K562 (cell line): ENCODE measurements at regions of chr1 and their contacts with region 1.

Region 1: DNA sequence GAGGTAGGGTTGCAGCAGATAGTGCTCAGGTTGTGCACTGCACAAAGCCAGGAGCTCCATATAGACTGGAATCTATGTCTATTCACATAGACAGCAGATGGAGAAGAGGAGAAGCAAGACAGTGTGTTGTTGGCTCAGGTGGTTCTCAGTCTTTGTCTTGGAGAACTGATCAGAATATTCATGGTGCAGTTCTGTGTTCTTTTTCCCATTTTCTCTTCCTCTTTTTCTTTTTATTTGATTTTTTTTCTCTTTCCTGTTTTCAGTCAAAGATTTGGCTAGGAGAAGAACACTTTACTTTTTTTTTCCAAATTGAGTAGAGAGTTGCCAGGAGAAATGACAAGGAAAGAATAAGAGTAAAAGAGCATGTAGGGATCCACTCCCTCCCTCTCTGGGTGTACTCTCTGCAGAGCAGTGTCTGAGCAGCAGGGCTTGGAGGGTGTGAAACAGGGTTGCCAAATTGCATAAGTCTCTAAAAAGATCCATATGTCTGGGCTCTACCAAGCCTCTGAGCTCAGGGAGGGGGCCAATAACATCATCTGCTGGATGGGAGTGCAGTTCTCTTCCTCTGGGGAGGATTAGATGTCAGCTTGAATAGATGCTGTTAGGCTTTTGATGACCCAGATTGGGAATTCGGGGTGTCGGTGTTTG is 8.7 kb upstream of the CD34 start:
- DNase-seq: no peak
- ATAC-seq: no peak
- H3K4me3 ChIP-seq: no peak overlapping the region
- H3K27ac ChIP-seq: no peak overlapping the region
- H3K4me1 ChIP-seq: peaks cover 6 to 26% of the 10 kb centered on the region in 2 experiments; a peak in 4 of 5 replicates
- H3K27me3 ChIP-seq: no peaks in the 10 kb centered on the region
- CTCF ChIP-seq: no peak
- EP300 ChIP-seq: no peak
- POLR2A ChIP-seq: no peak
- RAD21 ChIP-seq: no peak

Region 2: GRCh38 chr1:207811920-207812720 is 107.5 kb before region 1 on chr1:
- CTCF ChIA-PET with region 1: no interaction called
- POLR2A ChIA-PET with region 1: no interaction called
- in situ Hi-C with region 1: no loop called
- intact Hi-C with region 1: no loop called
- DNase-seq: peak; percentile 75 to 79 (median 78)
- ATAC-seq: peak; percentile 90
- H3K4me3 ChIP-seq: no peak overlapping the region
- H3K27ac ChIP-seq: no peak overlapping the region
- H3K4me1 ChIP-seq: peaks cover 34 to 60% of the 10 kb centered on the region in 2 experiments
- H3K27me3 ChIP-seq: no peaks in the 10 kb centered on the region
- CTCF ChIP-seq: peak; percentile 85 to 88 (median 85)
- EP300 ChIP-seq: no peak
- POLR2A ChIP-seq: no peak
- RAD21 ChIP-seq: peak; percentile 71 to 82

Region 3: DNA sequence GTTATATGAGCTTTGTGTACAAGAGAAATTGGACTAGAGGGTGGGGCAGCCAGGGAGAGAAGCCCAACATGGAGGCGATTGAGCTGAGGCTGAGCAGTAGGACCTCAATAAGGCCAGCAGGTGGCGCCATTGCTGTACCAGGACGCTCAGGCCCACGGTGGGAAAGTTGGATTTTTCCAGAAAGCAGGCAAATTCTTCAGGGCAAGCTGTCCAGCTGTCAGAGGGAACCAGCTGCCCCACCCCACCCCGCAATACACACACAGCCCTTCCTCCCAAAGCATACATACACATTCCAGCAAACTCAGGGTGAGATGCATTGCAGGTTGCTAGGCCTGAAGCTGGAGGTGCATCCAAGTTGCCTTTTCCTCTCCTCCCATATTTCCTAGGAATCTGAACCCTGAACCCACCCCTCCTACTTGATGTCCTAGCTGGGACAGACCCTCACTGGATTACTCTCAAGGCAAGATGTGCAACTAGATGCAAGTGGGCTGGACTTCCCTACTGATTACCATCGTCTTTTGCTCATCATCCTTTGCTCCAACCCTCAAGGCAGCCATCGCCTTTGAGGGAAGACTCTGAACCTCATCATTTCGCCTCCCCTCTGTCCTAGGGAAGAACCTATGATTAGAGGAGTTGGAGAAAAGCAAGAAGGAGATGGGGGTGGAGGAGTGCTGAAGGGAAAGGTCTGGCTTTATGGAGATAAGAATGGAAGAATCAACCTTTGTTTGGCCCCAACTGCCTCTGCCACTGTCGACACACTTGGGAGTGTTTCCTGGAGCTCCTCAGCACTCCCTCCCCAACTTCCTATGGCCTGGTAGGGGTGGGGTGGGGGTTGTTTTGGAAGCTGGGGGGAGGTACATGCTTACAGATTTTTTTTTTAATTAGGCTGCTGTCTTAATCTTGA is 34.3 kb before region 1 on chr1:
- CTCF ChIA-PET with region 1: no interaction called
- POLR2A ChIA-PET with region 1: no interaction called
- in situ Hi-C with region 1: no loop called
- intact Hi-C with region 1: loop called (anchors 1 kb)
- DNase-seq: peak; percentile 88 to 92 (median 90)
- ATAC-seq: peak; percentile 96
- H3K4me3 ChIP-seq: no peak overlapping the region
- H3K27ac ChIP-seq: no peak overlapping the region
- H3K4me1 ChIP-seq: peaks cover 21 to 35% of the 10 kb centered on the region in 2 experiments; a peak in 4 of 5 replicates
- H3K27me3 ChIP-seq: no peaks in the 10 kb centered on the region
- CTCF ChIP-seq: peak; percentile 94 to 99 (median 97)
- EP300 ChIP-seq: peak; percentile 35; the same call in 1 of the 2 replicates
- POLR2A ChIP-seq: no peak
- RAD21 ChIP-seq: peak; percentile 97 to 98

Region 4: DNA sequence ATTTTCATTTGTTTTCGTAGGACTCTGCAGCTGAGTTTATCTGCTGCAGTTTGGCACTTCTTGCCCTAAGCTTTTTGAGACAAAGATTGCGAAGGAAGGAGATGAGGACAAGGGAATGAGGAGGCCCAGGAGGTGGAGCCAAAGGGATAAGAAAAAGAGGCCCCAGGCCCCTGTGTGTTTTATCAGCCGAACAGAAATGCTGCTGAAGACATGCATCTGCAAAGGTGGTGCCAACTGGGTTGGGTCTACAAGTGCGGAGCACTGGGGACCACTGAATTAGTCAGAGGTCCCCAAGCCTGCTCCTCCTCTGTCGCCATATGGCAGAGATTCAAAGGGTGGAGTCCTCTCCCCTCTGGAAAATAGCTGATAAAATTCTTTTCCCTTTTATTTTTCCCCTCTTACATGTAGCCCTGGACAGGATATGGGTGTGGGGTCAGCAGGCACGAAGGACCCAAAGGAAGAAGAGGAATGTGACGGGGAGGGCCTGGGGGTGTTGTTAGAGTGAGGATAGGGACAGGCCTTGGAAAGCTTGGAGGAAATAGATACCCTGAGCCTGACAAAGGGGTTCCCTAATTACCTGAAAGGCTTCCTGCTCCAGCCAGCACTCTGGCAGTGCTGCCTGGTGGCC is 11.4 kb before region 1 on chr1:
- CTCF ChIA-PET with region 1: no interaction called
- POLR2A ChIA-PET with region 1: interaction called, 10 read pairs
- in situ Hi-C with region 1: no loop called
- intact Hi-C with region 1: no loop called
- DNase-seq: peak in 2 of 4 experiments; percentile 51 to 57
- ATAC-seq: peak; percentile 74
- H3K4me3 ChIP-seq: no peak overlapping the region
- H3K27ac ChIP-seq: no peak overlapping the region
- H3K4me1 ChIP-seq: peaks cover 11 to 18% of the 10 kb centered on the region in 2 experiments; a peak in 4 of 5 replicates
- H3K27me3 ChIP-seq: 0 out of 5 replicates have a peak, but pooled peaks cover 2 to 11% of the 10 kb centered on the region in 2 experiments
- CTCF ChIP-seq: peak; percentile 29 to 59 (median 48); a peak in 4 of 6 replicates
- EP300 ChIP-seq: no peak
- POLR2A ChIP-seq: no peak
- RAD21 ChIP-seq: peak; percentile 77 to 82

Region 5: GRCh38 chr1:207985996-207986395 is 66.3 kb after region 1 on chr1:
- CTCF ChIA-PET with region 1: no interaction called
- POLR2A ChIA-PET with region 1: no interaction called
- in situ Hi-C with region 1: no loop called
- intact Hi-C with region 1: no loop called
- DNase-seq: no peak
- ATAC-seq: no peak
- H3K4me3 ChIP-seq: no peak overlapping the region
- H3K27ac ChIP-seq: no peak overlapping the region
- H3K4me1 ChIP-seq: peaks cover 0 to 3% of the 10 kb centered on the region in 2 experiments; a peak in 1 of 5 replicates
- H3K27me3 ChIP-seq: peaks cover 35 to 50% of the 10 kb centered on the region in 2 experiments
- CTCF ChIP-seq: no peak
- EP300 ChIP-seq: no peak
- POLR2A ChIP-seq: no peak
- RAD21 ChIP-seq: no peak